ENCODE measurements at regions of chr17 and their contacts with region 1.

Region 1: DNA sequence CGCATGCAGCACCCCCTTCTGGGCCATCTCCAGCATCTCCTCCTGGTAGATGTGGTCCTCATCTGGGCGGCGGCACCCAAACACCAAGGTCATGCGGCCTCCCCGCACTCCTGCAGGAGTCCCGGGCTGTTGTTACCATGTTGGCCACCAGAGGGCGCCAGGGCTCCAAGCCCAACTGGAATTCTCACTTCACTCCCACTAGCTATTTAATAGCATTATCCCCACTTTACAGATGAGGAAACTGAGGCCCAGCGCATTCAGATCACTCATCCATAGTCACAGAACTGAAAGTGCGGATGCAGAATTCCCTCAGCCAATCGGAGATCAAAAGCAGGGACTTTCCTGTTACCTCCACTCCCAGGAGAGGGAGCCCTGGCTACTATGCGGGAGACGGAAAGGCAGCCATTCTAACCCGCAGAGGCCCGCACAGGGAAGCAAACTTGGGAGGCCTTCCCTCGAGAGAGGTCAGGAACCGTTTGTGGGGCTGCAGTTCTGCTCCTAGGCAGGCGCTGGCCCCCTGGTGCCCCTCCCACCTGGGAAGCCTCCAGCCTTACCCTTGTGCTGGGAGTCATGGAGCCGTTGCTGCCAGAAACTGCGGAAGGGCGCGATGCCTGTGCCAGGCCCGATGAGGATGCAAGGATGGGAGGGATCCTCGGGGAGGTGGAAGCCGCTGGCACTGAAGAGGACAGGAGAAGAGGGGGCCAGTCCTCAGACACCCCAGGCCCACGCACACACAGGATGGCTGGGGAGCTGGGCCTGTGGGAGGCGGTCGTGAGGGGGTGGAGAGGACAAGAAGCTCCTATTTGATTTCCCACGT is 40.1 kb downstream of the NOS2 start:
- DNase-seq: peak; percentile 49 to 79 (median 65)
- ATAC-seq: no peak
- H3K4me3 ChIP-seq: no peak overlapping the region
- H3K4me3 Mint-ChIP-seq: no peak overlapping the region
- H3K27ac ChIP-seq: no peak overlapping the region
- H3K27ac Mint-ChIP-seq: no peak overlapping the region
- H3K4me1 ChIP-seq: no peaks in the 10 kb centered on the region
- H3K4me1 Mint-ChIP-seq: no peaks in the 10 kb centered on the region
- H3K27me3 ChIP-seq: no peaks in the 10 kb centered on the region
- H3K27me3 Mint-ChIP-seq: peaks cover 5% of the 10 kb centered on the region
- CTCF ChIP-seq: peak; percentile 92

Region 2: GRCh38 chr17:27654654-27655524 is 105.4 kb before region 1 on chr17:
- CTCF ChIA-PET with region 1: no interaction called
- POLR2A ChIA-PET with region 1: no interaction called
- intact Hi-C with region 1: loop called (anchors 5 to 10 kb)
- DNase-seq: peak; percentile 40 to 81 (median 55)
- ATAC-seq: peak; percentile 69
- H3K4me3 ChIP-seq: no peak overlapping the region
- H3K4me3 Mint-ChIP-seq: no peak overlapping the region
- H3K27ac ChIP-seq: no peak overlapping the region
- H3K27ac Mint-ChIP-seq: no peak overlapping the region
- H3K4me1 ChIP-seq: peaks cover 9% of the 10 kb centered on the region
- H3K4me1 Mint-ChIP-seq: peaks cover 9% of the 10 kb centered on the region
- H3K27me3 ChIP-seq: no peaks in the 10 kb centered on the region
- H3K27me3 Mint-ChIP-seq: peaks cover 5% of the 10 kb centered on the region
- CTCF ChIP-seq: peak; percentile 97

Region 3: GRCh38 chr17:27879987-27880608 is 119.8 kb after region 1 on chr17:
- CTCF ChIA-PET with region 1: interaction called, 10 read pairs
- POLR2A ChIA-PET with region 1: no interaction called
- intact Hi-C with region 1: loop called in 1 of 2 experiments (anchors 1 kb)
- DNase-seq: peak; percentile 28 to 77 (median 55)
- ATAC-seq: peak; percentile 73
- H3K4me3 ChIP-seq: no peak overlapping the region
- H3K4me3 Mint-ChIP-seq: no peak overlapping the region
- H3K27ac ChIP-seq: no peak overlapping the region
- H3K27ac Mint-ChIP-seq: no peak overlapping the region
- H3K4me1 ChIP-seq: peaks cover 18% of the 10 kb centered on the region
- H3K4me1 Mint-ChIP-seq: peaks cover 22% of the 10 kb centered on the region
- H3K27me3 ChIP-seq: no peaks in the 10 kb centered on the region
- H3K27me3 Mint-ChIP-seq: no peaks in the 10 kb centered on the region
- CTCF ChIP-seq: peak; percentile 66

Region 4: GRCh38 chr17:28252436-28252835 is 492.2 kb after region 1 on chr17:
- CTCF ChIA-PET with region 1: interaction called, 5 read pairs
- POLR2A ChIA-PET with region 1: no interaction called
- intact Hi-C with region 1: loop called in 1 of 2 experiments (anchors 5 kb)
- DNase-seq: no peak
- ATAC-seq: no peak
- H3K4me3 ChIP-seq: no peak overlapping the region
- H3K4me3 Mint-ChIP-seq: no peak overlapping the region
- H3K27ac ChIP-seq: no peak overlapping the region
- H3K27ac Mint-ChIP-seq: no peak overlapping the region
- H3K4me1 ChIP-seq: peaks cover 12% of the 10 kb centered on the region
- H3K4me1 Mint-ChIP-seq: peaks cover 8% of the 10 kb centered on the region
- H3K27me3 ChIP-seq: peaks cover 15 to 29% of the 10 kb centered on the region in 2 experiments
- H3K27me3 Mint-ChIP-seq: peaks cover 49% of the 10 kb centered on the region
- CTCF ChIP-seq: no peak